Activated CD8-positive, alpha-beta memory T cell treated with anti-CD3 and anti-CD28 coated beads, Interleukin-2, amount 10 ng/mL, durations not matched to agents 7 days and 5 days (primary cell): ENCODE measurements at regions of chr14 and their contacts with region 1.

Region 1: DNA sequence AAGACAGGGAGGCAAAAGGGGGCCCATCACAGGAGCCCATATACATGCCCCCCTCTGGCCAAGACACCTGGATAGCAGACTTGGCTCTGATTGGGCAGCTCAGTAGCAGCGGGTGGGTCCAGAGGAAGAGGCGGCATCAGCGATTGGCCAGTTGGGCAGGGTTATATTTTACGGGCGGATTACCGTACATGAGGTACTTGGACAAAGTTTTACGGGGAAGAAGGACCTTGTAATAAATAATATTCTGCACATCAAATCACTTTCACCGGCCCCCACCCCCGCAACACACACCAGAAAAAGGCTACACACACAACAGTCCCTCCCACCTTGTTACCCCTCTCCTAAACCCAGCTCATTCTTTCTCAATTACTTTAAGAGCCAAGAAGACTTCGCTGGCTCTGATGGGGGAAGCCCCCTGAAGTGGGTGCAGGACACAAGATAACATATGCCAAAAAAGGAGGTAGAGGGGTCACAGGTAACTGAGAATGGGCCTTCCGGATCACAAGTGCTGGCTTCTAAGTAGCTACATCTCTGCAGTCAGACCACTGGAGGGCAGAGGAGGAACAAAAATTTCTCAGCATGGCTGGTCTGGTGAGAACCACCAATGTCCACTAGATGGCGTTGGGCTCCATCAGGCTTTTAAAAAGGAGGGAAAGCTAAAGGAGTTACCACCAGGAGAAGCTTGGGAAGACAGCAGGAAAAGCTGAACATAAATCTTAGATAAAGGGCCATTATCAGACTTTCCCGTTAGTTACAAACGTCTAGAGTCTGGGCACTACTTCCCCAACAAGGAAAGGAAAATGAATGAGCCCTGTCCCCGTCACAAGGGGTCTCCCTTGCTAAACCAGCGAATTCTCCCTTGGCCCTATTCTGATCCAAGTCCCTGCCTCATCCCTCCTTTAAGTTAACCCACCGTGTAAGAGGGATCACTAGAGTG is 11.4 kb upstream of the CDH24 start:
- DNase-seq: peak; percentile 85
- ATAC-seq: peak; percentile 75
- H3K4me3 Mint-ChIP-seq: peak overlapping the region; percentile 48
- H3K27ac Mint-ChIP-seq: peak overlapping the region; percentile 50
- H3K4me1 Mint-ChIP-seq: peaks cover 34% of the 10 kb centered on the region
- H3K27me3 Mint-ChIP-seq: no peaks in the 10 kb centered on the region

Region 2: GRCh38 chr14:22955702-22956569 is 112.8 kb before region 1 on chr14:
- CTCF ChIA-PET with region 1: interaction called, 24 read pairs
- DNase-seq: no peak
- ATAC-seq: no peak
- H3K4me3 Mint-ChIP-seq: peak overlapping the region; percentile 94
- H3K27ac Mint-ChIP-seq: peak overlapping the region; percentile 88
- H3K4me1 Mint-ChIP-seq: peaks cover 34% of the 10 kb centered on the region
- H3K27me3 Mint-ChIP-seq: peaks cover 4% of the 10 kb centered on the region

Region 3: GRCh38 chr14:22973217-22974032 is 95.3 kb before region 1 on chr14:
- CTCF ChIA-PET with region 1: interaction called, 17 read pairs
- DNase-seq: peak; percentile 52
- ATAC-seq: peak; percentile 51
- H3K4me3 Mint-ChIP-seq: no peak overlapping the region
- H3K27ac Mint-ChIP-seq: no peak overlapping the region
- H3K4me1 Mint-ChIP-seq: no peaks in the 10 kb centered on the region
- H3K27me3 Mint-ChIP-seq: peaks cover 14% of the 10 kb centered on the region

Region 4: DNA sequence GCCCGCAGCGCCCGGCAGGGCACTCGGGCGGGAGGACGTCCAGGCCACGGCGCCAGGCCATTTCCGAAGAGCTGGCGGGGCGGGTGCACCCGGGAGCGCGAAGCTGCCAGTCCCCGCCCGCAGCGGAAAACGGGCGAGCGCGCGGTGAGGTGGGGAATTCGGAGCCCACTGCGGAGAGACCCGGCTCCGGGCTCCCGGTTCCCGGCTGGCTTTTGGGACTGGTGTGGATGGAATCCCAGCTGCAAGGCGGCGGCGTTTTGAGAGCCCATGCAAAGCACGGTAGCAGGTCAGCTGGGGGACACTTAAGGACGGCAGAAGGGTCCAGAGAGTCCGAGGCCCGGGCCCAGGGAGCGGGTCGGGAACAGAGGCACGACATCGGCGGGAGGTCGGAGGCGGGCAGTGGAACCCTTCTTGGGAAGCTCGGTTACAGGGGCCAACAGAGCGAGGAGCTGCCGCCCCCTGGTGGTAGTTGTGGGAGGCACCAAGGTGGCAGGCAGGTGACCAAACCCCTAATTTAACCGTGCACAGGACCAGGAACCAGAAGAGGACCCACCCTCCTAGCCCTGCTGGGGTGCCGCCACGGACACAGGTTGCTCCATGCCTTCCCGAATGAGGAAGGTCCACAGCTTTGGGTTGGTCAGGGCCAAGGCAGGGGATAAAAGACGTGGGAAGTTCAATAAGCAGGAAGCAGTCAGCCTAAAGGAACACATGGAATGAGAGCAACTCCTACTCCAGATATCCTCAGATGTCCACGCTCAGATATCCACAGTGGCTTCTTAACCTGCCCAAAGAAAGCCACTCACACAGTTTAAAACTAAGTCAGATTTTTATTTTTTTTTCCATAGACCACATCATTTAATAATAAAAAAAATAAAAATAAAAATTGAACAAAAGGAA is 10.7 kb before region 1 on chr14:
- CTCF ChIA-PET with region 1: interaction called, 54 read pairs
- DNase-seq: peak; percentile 92
- ATAC-seq: peak; percentile 77
- H3K4me3 Mint-ChIP-seq: peak overlapping the region; percentile 77
- H3K27ac Mint-ChIP-seq: no peak overlapping the region
- H3K4me1 Mint-ChIP-seq: peaks cover 16% of the 10 kb centered on the region
- H3K27me3 Mint-ChIP-seq: peaks cover 8% of the 10 kb centered on the region

Region 5: DNA sequence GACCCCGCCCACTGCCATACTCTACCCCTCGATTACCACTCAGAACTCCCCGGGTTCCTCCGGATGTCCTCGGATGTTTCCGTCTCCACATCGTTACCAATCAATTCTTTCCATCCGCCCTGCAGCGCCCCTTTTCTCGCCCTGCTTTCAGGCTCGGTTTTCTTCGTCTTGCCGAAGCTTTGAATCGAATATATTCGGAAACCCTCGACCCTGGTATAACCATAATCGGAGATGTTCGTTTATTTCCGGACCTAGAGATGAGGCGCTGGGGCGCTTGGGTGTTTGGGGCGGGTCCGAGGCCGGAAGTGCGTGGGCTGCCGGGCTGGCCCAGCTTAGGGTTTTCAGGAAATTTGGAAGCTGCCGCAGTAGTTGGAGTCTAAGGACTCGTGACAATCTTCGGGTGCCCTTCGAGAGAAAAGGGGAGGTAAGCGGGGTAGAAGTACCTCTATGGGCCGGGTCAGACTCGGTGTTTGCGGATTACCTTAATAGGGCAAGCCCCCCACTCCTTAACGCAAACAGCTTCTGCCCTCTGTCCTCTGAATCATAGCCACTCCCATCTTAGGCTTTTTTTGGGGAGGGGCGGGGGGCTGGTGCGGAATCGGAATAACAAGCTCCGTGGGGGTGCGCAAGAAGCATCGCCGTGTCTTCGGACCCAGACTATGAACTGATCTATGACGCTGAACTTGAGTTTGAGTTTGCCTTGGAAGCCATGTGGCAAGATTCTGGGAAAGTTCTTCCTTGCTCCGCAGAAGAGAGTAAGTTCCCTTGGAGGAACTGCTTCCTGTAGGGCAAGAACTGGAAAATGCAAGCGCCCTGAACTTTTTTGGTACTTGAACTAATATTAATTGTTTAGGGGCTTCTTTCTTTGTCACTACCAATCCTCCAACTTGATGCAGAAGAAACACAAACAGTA is 26.7 kb after region 1 on chr14 and contains the start of gene C14orf119:
- CTCF ChIA-PET with region 1: interaction called, 51 read pairs
- DNase-seq: peak; percentile 100
- ATAC-seq: peak; percentile 94
- H3K4me3 Mint-ChIP-seq: no peak within 1 kb of the TSS
- H3K27ac Mint-ChIP-seq: no peak within 1 kb of the TSS
- H3K4me1 Mint-ChIP-seq: peaks cover 36% of the 10 kb centered on the region
- H3K27me3 Mint-ChIP-seq: no peaks in the 10 kb centered on the region
- total RNA-seq, gene C14orf119: 44.6 to 53.2 TPM

Region 6: GRCh38 chr14:23186913-23187654 is 118.3 kb after region 1 on chr14:
- CTCF ChIA-PET with region 1: interaction called, 19 read pairs
- DNase-seq: no peak
- ATAC-seq: no peak
- H3K4me3 Mint-ChIP-seq: no peak overlapping the region
- H3K27ac Mint-ChIP-seq: no peak overlapping the region
- H3K4me1 Mint-ChIP-seq: no peaks in the 10 kb centered on the region
- H3K27me3 Mint-ChIP-seq: peaks cover 8% of the 10 kb centered on the region